ENCODE measurements at regions of chr5 and their contacts with region 1.

Region 1: GRCh38 chr5:79133657-79134451 is 22.2 kb downstream of the BHMT start:
- DNase-seq: peak; percentile 88
- ATAC-seq: peak; percentile 94
- H3K4me3 ChIP-seq: peak overlapping the region; percentile 31
- H3K27ac ChIP-seq: peak overlapping the region; percentile 60; the same call in 1 of the 2 replicates
- H3K4me1 ChIP-seq: no peaks in the 10 kb centered on the region
- H3K27me3 ChIP-seq: peaks cover 13% of the 10 kb centered on the region
- CTCF ChIP-seq: peak; percentile 86
- POLR2A ChIP-seq: no peak
- RAD21 ChIP-seq: peak; percentile 79

Region 2: DNA sequence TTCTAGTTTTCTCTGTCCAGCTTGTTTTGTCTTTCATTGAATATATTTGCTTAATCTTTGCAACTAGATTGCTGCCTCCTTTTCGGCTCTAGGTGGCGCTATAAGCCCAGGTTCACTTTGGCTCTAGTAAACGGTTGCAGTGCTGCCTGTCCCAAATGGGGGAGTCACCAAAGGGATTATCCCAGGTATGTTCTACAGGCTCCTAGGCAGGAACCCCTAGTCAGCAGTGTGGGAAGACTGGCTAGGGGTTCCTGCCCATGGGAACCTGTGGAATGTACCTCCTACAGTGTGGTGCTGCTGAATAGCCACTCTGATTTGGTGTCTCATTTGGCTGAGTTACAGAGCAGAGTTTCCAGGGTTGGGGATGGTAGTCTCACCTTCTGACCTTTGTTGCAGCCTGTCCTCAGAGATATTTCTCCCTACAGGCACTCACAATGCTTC is 233.9 kb before region 1 on chr5:
- CTCF ChIA-PET with region 1: interaction called, 10 read pairs
- POLR2A ChIA-PET with region 1: no interaction called
- dilution Hi-C with region 1: no loop called
- in situ Hi-C with region 1: loop called (anchors 10 kb)
- intact Hi-C with region 1: loop called (anchors 2 kb)
- DNase-seq: peak; percentile 67
- ATAC-seq: peak; percentile 19; the same call in 1 of the 2 replicates
- H3K4me3 ChIP-seq: no peak overlapping the region
- H3K27ac ChIP-seq: no peak overlapping the region
- H3K4me1 ChIP-seq: peaks cover 9% of the 10 kb centered on the region
- H3K27me3 ChIP-seq: no peaks in the 10 kb centered on the region
- CTCF ChIP-seq: peak; percentile 85
- POLR2A ChIP-seq: peak; percentile 39; the same call in 1 of the 2 replicates
- RAD21 ChIP-seq: peak; percentile 93

Region 3: GRCh38 chr5:78972654-78973428 is 161.0 kb before region 1 on chr5:
- CTCF ChIA-PET with region 1: no interaction called
- POLR2A ChIA-PET with region 1: no interaction called
- dilution Hi-C with region 1: no loop called
- in situ Hi-C with region 1: no loop called
- intact Hi-C with region 1: no loop called
- DNase-seq: peak; percentile 67
- ATAC-seq: peak; percentile 79
- H3K4me3 ChIP-seq: no peak overlapping the region
- H3K27ac ChIP-seq: peak overlapping the region; percentile 53; the same call in 1 of the 2 replicates
- H3K4me1 ChIP-seq: peaks cover 25% of the 10 kb centered on the region
- H3K27me3 ChIP-seq: no peaks in the 10 kb centered on the region
- CTCF ChIP-seq: no peak
- POLR2A ChIP-seq: no peak
- RAD21 ChIP-seq: no peak

Region 4: GRCh38 chr5:79200573-79201183 is 66.8 kb after region 1 on chr5:
- CTCF ChIA-PET with region 1: interaction called, 5 read pairs
- POLR2A ChIA-PET with region 1: no interaction called
- dilution Hi-C with region 1: no loop called
- in situ Hi-C with region 1: no loop called
- intact Hi-C with region 1: loop called (anchors 2 kb)
- DNase-seq: peak; percentile 18
- ATAC-seq: peak; percentile 69; the same call in 1 of the 2 replicates
- H3K4me3 ChIP-seq: no peak overlapping the region
- H3K27ac ChIP-seq: no peak overlapping the region
- H3K4me1 ChIP-seq: no peaks in the 10 kb centered on the region
- H3K27me3 ChIP-seq: no peaks in the 10 kb centered on the region
- CTCF ChIP-seq: peak; percentile 45
- POLR2A ChIP-seq: no peak
- RAD21 ChIP-seq: peak; percentile 27; the same call in 1 of the 2 replicates

Region 5: DNA sequence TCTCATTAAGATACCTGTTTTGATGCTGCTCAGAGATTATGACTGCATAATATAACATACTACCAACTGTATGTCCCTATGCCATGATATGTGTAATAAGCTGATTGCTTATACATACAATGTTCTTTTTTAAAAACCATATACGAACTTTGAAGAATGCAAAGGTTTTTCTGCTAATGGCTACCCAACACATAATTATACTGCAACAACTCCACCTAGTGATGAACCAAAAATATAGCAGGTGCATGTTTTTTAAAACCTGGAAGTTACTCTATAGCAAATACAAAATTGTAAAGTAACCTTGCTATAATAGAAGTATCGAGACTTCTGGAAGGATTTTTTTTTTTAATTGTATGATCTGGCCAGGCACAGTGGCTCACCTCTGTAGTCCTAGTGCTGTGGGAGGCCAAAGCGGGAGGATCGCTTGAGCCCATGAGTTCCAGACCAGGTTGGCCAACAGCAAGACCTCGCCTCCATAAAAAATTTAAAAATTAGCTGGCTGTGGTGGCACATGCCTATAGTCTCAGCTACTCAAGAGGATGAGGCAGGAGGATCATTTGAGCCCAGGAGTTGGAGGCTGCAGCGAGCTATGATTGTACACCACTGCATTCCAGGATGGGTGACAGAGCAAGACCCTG is 331.0 kb after region 1 on chr5:
- CTCF ChIA-PET with region 1: interaction called, 9 read pairs
- POLR2A ChIA-PET with region 1: no interaction called
- dilution Hi-C with region 1: no loop called
- in situ Hi-C with region 1: loop called (anchors 5 kb)
- intact Hi-C with region 1: loop called (anchors 1 kb)
- DNase-seq: peak; percentile 53
- ATAC-seq: peak; percentile 86
- H3K4me3 ChIP-seq: no peak overlapping the region
- H3K27ac ChIP-seq: no peak overlapping the region
- H3K4me1 ChIP-seq: no peaks in the 10 kb centered on the region
- H3K27me3 ChIP-seq: no peaks in the 10 kb centered on the region
- CTCF ChIP-seq: peak; percentile 76
- POLR2A ChIP-seq: no peak
- RAD21 ChIP-seq: peak; percentile 75

Region 6: GRCh38 chr5:79621042-79621441 is 487.2 kb after region 1 on chr5:
- CTCF ChIA-PET with region 1: no interaction called
- POLR2A ChIA-PET with region 1: interaction called, 12 read pairs
- dilution Hi-C with region 1: no loop called
- in situ Hi-C with region 1: no loop called
- intact Hi-C with region 1: no loop called
- DNase-seq: peak; percentile 90
- ATAC-seq: peak; percentile 49; the same call in 1 of the 2 replicates
- H3K4me3 ChIP-seq: no peak overlapping the region
- H3K27ac ChIP-seq: no peak overlapping the region
- H3K4me1 ChIP-seq: peaks cover 2% of the 10 kb centered on the region; the same call in 1 of the 2 replicates
- H3K27me3 ChIP-seq: no peaks in the 10 kb centered on the region
- CTCF ChIP-seq: no peak
- POLR2A ChIP-seq: no peak
- RAD21 ChIP-seq: no peak

Region 7: DNA sequence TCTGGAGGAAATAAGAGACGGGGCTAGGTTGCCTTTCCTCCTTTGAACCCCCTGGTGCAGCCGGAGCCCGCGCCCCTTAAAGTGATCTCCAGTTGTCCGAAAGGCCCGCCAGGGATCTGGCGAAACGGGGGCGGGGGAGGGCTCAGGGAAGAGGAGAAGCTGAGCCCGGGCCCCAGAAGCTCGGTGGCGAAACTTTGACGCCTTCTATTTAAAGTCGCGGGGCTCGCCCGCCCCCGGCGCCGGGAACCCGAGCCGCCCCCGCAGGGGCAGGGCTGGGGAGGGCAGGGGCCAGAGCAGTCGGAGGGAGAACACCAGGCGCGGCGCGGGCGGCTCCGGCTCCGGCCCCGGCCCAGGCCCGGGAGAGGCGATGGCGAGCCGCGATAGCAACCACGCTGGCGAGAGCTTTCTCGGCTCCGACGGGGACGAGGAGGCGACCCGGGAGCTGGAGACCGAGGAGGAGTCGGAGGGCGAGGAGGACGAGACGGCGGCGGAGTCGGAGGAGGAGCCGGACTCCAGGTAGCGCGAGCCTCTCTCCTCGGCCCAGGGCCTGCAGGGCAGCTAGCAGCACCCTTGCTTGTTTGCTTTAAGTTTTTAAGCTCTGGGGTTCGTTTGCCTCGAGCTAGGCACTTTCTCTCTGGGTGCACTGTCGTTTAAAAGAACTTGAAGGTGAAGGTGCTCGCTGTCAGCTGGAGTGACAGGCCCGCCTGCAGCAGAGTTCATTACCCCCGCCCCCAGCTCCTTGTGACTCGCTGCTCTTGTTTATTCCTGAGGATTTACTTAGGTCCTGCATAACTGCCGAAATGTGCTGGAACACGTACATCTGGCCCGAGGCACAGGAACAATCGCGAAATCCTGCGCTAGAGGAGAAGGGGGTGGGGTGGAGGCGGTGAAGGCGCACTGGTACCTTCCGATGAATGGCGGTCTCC is 556.0 kb after region 1 on chr5 and contains the start of gene CMYA5:
- CTCF ChIA-PET with region 1: no interaction called
- POLR2A ChIA-PET with region 1: no interaction called
- dilution Hi-C with region 1: no loop called
- in situ Hi-C with region 1: no loop called
- intact Hi-C with region 1: no loop called
- DNase-seq: peak; percentile 33
- ATAC-seq: peak; percentile 67
- H3K4me3 ChIP-seq: peak within 1 kb of the TSS; percentile 22
- H3K27ac ChIP-seq: peak within 1 kb of the TSS; percentile 21; the same call in 1 of the 2 replicates
- H3K4me1 ChIP-seq: peaks cover 3% of the 10 kb centered on the region; the same call in 1 of the 2 replicates
- H3K27me3 ChIP-seq: no peaks in the 10 kb centered on the region
- CTCF ChIP-seq: no peak
- POLR2A ChIP-seq: no peak
- RAD21 ChIP-seq: no peak
- total RNA-seq, gene CMYA5: 0.83 and 0.90 TPM in 2 replicates

Region 8: DNA sequence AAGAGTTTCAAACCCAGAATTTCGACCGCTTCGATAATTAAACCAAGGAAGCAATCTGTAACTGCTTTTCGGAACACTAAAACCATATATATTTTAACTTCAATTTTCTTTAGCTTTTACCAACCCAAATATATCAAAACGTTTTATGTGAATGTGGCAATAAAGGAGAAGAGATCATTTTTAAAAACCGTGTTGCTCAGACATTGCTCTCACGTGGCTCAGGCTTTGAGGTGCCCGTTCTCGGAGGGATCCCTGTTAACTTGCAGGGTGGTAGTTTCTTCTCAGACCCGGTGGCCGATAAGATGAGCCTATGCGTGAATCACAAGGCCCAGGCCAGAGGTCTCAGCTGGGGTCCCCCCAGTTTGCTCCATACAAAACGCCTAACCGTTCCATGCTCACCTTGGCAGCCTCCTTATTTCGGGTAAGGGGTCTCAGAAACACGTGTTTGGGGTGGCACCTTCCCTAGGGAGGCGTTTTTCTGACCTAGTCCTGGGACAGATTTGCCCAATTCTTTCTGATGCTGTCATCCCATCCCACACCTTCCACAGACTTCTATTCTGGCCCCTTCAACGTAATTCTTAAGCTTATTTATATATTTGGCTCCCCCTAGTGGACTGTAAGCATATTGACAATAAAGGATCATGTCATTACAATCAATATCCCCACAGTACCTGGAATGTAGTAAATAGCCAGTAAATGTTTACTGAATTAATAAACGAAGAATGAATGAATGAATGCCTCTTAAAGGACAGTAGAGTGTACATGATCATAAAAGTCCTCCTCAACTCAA is 949.4 kb after region 1 on chr5:
- CTCF ChIA-PET with region 1: no interaction called
- POLR2A ChIA-PET with region 1: no interaction called
- dilution Hi-C with region 1: no loop called
- in situ Hi-C with region 1: no loop called
- intact Hi-C with region 1: loop called (anchors 1 kb)
- DNase-seq: peak; percentile 72
- ATAC-seq: peak; percentile 83
- H3K4me3 ChIP-seq: no peak overlapping the region
- H3K27ac ChIP-seq: no peak overlapping the region
- H3K4me1 ChIP-seq: peaks cover 3% of the 10 kb centered on the region; the same call in 1 of the 2 replicates
- H3K27me3 ChIP-seq: peaks cover 2% of the 10 kb centered on the region; the same call in 1 of the 2 replicates
- CTCF ChIP-seq: peak; percentile 80
- POLR2A ChIP-seq: no peak
- RAD21 ChIP-seq: peak; percentile 69

Measured in IMR-90 (cell line).